ENCODE measurements at regions of chr5 and their contacts with region 1.

Region 1: GRCh38 chr5:135251093-135251492 is 147.9 kb downstream of the MACROH2A1 start:
- DNase-seq: no peak
- H3K4me3 Mint-ChIP-seq: no peak overlapping the region
- H3K27ac Mint-ChIP-seq: no peak overlapping the region
- H3K4me1 Mint-ChIP-seq: no peaks in the 10 kb centered on the region
- H3K27me3 Mint-ChIP-seq: no peaks in the 10 kb centered on the region

Region 2: DNA sequence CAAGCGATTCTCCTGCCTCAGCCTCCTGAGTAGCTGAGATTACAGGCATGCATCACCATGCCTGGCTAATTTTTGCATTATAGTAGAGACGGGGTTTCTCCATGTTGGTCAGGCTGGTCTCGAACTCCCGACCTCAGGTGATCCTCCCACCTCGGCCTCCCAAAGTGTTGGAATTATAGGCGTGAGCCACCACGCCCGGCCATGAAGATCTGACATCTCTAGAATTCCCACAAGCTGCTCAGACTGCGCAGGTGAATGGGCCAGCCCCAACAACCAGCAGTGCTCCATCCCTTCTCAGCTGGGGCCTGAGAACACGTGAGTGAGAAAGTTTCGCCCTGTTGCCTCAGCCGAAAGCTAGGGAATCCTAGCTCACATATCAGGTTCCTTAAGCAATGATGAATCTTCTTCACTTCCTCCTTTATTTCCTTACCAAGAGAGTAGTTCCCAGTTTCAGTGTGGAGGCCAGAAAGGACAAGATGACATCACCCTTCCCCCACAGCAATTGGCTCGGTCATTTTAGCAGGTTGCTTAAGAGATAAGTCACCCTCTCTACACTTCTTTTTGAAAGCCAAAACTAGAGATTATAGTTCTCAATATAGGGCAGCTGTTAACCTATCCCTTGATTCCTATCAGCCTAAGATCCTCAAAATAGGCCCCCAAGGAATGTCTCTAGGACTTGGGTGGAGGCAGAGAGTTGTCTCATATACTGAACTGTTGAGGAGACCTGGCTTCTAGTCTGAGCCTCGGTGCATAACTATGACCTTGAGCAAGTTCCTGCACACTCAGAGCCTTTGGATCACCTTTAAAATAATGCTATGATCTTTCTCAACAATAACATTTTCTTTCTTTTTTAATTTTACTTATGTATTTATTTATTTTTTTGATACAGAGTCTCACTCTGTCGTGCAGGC is 1001.4 kb before region 1 on chr5:
- CTCF ChIA-PET with region 1: no interaction called
- intact Hi-C with region 1: loop called (anchors 5 kb)
- DNase-seq: no peak
- H3K4me3 Mint-ChIP-seq: no peak overlapping the region
- H3K27ac Mint-ChIP-seq: no peak overlapping the region
- H3K4me1 Mint-ChIP-seq: no peaks in the 10 kb centered on the region
- H3K27me3 Mint-ChIP-seq: no peaks in the 10 kb centered on the region

Region 3: GRCh38 chr5:135072387-135073281 is 178.5 kb before region 1 on chr5:
- CTCF ChIA-PET with region 1: no interaction called
- intact Hi-C with region 1: no loop called
- DNase-seq: no peak
- H3K4me3 Mint-ChIP-seq: no peak overlapping the region
- H3K27ac Mint-ChIP-seq: no peak overlapping the region
- H3K4me1 Mint-ChIP-seq: no peaks in the 10 kb centered on the region
- H3K27me3 Mint-ChIP-seq: no peaks in the 10 kb centered on the region

Measured in activated naive CD4-positive, alpha-beta T cell treated with anti-CD3 and anti-CD28 coated beads for 36 hours (primary cell).